ENCODE measurements at regions of chr4 and their contacts with region 1.

Region 1: DNA sequence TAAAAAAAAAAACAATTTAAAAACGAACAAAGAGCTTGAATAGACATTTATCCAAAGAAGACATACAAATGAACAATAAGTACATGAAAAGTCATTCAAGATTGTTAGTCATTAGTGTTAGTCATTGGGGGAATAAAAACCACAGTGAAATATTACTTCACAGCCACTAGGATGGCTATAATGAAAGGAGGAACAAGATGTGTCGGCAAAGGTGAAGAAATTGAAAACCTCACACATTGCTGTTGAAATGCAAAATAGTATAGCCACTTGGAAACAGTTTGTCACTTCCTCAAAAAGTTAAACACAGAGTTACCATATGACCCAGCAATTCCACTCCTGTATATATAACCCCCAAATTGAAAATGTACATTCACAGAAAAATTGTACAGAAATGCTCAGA is 45.2 kb upstream of the SLC39A8 start:
- DNase-seq: no peak
- H3K4me3 Mint-ChIP-seq: no peak overlapping the region
- H3K27ac Mint-ChIP-seq: no peak overlapping the region
- H3K4me1 Mint-ChIP-seq: peaks cover 17% of the 10 kb centered on the region
- H3K27me3 Mint-ChIP-seq: peaks cover 4% of the 10 kb centered on the region

Region 2: GRCh38 chr4:101205916-101206315 is 1184.5 kb before region 1 on chr4:
- CTCF ChIA-PET with region 1: no interaction called
- intact Hi-C with region 1: loop called (anchors 1 kb)
- DNase-seq: peak; percentile 60
- H3K4me3 Mint-ChIP-seq: no peak overlapping the region
- H3K27ac Mint-ChIP-seq: no peak overlapping the region
- H3K4me1 Mint-ChIP-seq: peaks cover 24% of the 10 kb centered on the region
- H3K27me3 Mint-ChIP-seq: no peaks in the 10 kb centered on the region

Region 3: DNA sequence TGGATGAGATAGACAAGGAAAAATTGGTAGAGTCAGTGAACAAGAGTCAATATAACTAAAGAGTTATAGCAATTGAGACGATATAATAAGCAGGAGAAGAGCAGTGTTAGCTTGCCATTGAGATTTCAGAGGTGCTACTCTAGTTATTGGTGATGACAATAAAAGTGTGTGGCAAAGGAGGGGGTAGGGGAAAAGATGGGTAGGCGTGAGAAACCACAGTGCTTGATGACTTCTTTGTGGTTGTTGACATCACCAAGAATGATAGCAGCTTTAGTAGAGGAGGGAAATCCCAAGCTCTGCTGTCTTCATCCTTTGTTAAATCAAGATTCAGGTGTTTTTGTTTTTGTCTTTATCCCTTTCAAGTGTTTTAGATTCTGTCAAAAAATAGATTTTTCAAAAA is 863.2 kb before region 1 on chr4:
- CTCF ChIA-PET with region 1: no interaction called
- intact Hi-C with region 1: loop called (anchors 1 kb)
- DNase-seq: peak; percentile 88
- H3K4me3 Mint-ChIP-seq: no peak overlapping the region
- H3K27ac Mint-ChIP-seq: no peak overlapping the region
- H3K4me1 Mint-ChIP-seq: peaks cover 15% of the 10 kb centered on the region
- H3K27me3 Mint-ChIP-seq: peaks cover 45% of the 10 kb centered on the region

Region 4: GRCh38 chr4:102430461-102430910 is 40.0 kb after region 1 on chr4:
- CTCF ChIA-PET with region 1: interaction called, 6 read pairs
- intact Hi-C with region 1: loop called (anchors 1 kb)
- DNase-seq: no peak
- H3K4me3 Mint-ChIP-seq: peak overlapping the region; percentile 82
- H3K27ac Mint-ChIP-seq: peak overlapping the region; percentile 81
- H3K4me1 Mint-ChIP-seq: peaks cover 8% of the 10 kb centered on the region
- H3K27me3 Mint-ChIP-seq: peaks cover 5% of the 10 kb centered on the region

Region 5: GRCh38 chr4:102627831-102628523 is 237.5 kb after region 1 on chr4:
- CTCF ChIA-PET with region 1: no interaction called
- intact Hi-C with region 1: loop called (anchors 1 kb)
- DNase-seq: peak; percentile 62
- H3K4me3 Mint-ChIP-seq: peak overlapping the region; percentile 22
- H3K27ac Mint-ChIP-seq: peak overlapping the region; percentile 54
- H3K4me1 Mint-ChIP-seq: peaks cover 75% of the 10 kb centered on the region
- H3K27me3 Mint-ChIP-seq: no peaks in the 10 kb centered on the region

Region 6: DNA sequence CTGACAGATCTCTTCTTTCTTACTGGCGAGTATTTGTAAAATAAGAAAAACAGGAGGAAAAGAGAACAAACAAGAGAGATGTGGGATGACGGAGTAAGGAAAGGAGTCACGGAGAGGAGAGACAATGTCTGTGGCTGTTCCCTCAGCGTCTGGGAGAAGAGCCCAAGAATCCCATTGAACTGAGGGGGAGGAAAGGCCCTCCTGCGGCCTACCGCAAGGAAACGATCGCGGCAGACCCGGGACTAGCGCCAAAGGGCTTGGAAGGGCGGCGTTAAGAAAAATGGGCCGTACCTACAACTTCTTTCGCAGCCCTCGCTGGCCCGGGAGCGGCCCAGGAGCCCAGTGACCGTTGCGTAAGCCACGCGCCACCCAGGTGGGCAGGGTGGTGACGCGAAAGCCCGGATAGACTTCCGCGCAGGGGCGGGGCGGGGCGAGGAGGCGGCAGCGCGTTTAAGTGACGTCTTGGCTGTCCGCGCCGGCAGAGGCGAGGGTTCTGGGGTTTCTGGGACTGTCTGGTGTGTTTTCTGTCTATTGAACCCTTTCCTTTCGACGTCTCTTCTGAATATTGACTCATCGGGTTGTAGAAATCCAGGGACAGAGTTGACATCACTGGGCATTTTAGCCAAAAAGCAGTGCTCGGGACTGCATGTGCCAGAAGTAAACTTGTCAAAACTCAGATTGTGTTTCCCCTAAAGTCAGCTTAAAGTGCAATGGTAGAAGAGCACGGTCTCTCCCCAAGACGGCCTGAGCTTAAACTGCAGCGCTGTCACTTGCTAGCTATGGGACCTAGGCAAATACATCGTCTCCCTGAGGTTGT is 629.1 kb after region 1 on chr4 and contains the start of gene SLC9B1:
- CTCF ChIA-PET with region 1: no interaction called
- intact Hi-C with region 1: loop called (anchors 1 kb)
- DNase-seq: peak; percentile 96
- H3K4me3 Mint-ChIP-seq: peak within 1 kb of the TSS; percentile 96
- H3K27ac Mint-ChIP-seq: peak within 1 kb of the TSS; percentile 97
- H3K4me1 Mint-ChIP-seq: peaks cover 20% of the 10 kb centered on the region
- H3K27me3 Mint-ChIP-seq: no peaks in the 10 kb centered on the region
- total RNA-seq, gene SLC9B1: 2.0 to 3.5 TPM